ENCODE measurements at regions of chr11 and their contacts with region 1.

Region 1: GRCh38 chr11:78351193-78351592 is 66.4 kb downstream of the GAB2 start:
- DNase-seq: no peak
- ATAC-seq: peak; percentile 12; the same call in 1 of the 2 replicates
- H3K4me3 ChIP-seq: peak overlapping the region in 1 of 2 experiments; percentile 17; a peak in 2 of 4 replicates
- H3K27ac ChIP-seq: peak overlapping the region; percentile 78
- H3K4me1 ChIP-seq: peaks cover 23% of the 10 kb centered on the region
- H3K27me3 ChIP-seq: no peaks in the 10 kb centered on the region
- CTCF ChIP-seq: no peak

Region 2: DNA sequence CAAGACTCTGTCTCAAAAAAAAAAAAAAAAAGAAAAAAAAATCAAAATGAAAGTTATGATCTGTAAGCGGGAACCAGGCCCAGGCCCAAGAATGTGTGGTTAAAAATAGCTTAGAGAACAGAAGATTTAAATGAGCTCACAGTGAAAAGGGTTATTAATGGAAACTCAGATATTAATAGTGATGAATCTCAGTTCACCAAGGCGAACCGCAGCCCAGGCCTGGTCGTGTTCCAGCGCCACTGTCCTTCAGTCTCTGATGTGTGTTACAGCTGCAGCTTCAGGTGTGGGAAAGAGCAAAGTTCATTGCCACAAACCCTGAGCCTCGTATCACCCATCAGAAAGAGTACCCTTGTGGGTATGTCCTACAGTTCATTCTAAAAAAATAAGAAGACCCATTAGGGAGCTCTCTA is 40.7 kb before region 1 on chr11:
- CTCF ChIA-PET with region 1: no interaction called
- POLR2A ChIA-PET with region 1: no interaction called
- in situ Hi-C with region 1: no loop called
- intact Hi-C with region 1: no loop called
- DNase-seq: no peak
- ATAC-seq: no peak
- H3K4me3 ChIP-seq: no peak overlapping the region
- H3K27ac ChIP-seq: no peak overlapping the region
- H3K4me1 ChIP-seq: 0 out of 2 replicates have a peak, but pooled peaks cover 3% of the 10 kb centered on the region
- H3K27me3 ChIP-seq: no peaks in the 10 kb centered on the region
- CTCF ChIP-seq: no peak

Region 3: DNA sequence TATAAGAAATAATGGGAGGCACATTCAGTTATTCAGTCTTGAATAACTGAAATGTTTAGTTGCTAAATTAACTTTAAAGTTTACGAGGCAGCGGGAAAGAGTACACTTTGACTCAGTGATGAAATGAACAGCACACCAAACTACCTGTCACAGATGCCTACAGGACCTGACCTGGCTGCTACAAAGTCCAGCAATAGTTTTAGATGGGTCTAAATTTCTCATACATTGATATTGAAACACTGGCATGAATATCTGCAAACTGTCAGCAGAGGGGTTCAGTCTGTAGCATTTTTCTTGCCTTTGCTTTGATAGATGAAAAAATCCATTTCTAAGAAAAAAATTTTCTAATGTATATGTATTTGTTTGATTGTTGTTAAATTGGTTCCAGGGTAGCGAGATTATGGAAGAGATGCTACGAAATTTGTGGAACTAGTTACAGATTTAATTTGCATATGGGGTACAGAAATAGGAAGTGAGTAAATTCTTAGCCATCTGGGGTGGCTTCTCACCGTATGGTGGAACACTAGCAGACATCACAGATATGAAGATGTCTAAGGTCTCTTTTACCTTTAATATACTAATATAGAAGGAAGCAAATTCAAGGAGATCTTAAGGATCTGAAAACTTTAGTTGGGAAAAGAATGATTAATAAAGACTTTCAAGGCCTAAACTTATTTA is 87.2 kb after region 1 on chr11:
- CTCF ChIA-PET with region 1: no interaction called
- POLR2A ChIA-PET with region 1: interaction called, 10 read pairs
- in situ Hi-C with region 1: no loop called
- intact Hi-C with region 1: no loop called
- DNase-seq: no peak
- ATAC-seq: no peak
- H3K4me3 ChIP-seq: no peak overlapping the region
- H3K27ac ChIP-seq: no peak overlapping the region
- H3K4me1 ChIP-seq: no peaks in the 10 kb centered on the region
- H3K27me3 ChIP-seq: no peaks in the 10 kb centered on the region
- CTCF ChIP-seq: no peak